Caco-2 (cell line): ENCODE measurements at regions of chr15 and their contacts with region 1.

Region 1: GRCh38 chr15:89017370-89018066 is 70.7 kb upstream of the ABHD2 start:
- DNase-seq: peak; percentile 83 to 88
- H3K4me3 ChIP-seq: peak overlapping the region; percentile 43
- H3K4me3 Mint-ChIP-seq: peak overlapping the region; percentile 73
- H3K27ac Mint-ChIP-seq: peak overlapping the region; percentile 39
- H3K4me1 ChIP-seq: no peaks in the 10 kb centered on the region
- H3K4me1 Mint-ChIP-seq: peaks cover 7% of the 10 kb centered on the region
- H3K27me3 ChIP-seq: no peaks in the 10 kb centered on the region
- H3K27me3 Mint-ChIP-seq: no peaks in the 10 kb centered on the region
- CTCF ChIP-seq: peak; percentile 75 to 84

Region 2: GRCh38 chr15:88989578-88989977 is 27.9 kb before region 1 on chr15:
- CTCF ChIA-PET with region 1: no interaction called
- POLR2A ChIA-PET with region 1: no interaction called
- intact Hi-C with region 1: loop called (anchors 2 kb)
- DNase-seq: no peak
- H3K4me3 ChIP-seq: peak overlapping the region; percentile 38
- H3K4me3 Mint-ChIP-seq: peak overlapping the region; percentile 73
- H3K27ac Mint-ChIP-seq: peak overlapping the region; percentile 83
- H3K4me1 ChIP-seq: peaks cover 85% of the 10 kb centered on the region
- H3K4me1 Mint-ChIP-seq: peaks cover 44% of the 10 kb centered on the region
- H3K27me3 ChIP-seq: no peaks in the 10 kb centered on the region
- H3K27me3 Mint-ChIP-seq: no peaks in the 10 kb centered on the region
- CTCF ChIP-seq: no peak

Region 3: DNA sequence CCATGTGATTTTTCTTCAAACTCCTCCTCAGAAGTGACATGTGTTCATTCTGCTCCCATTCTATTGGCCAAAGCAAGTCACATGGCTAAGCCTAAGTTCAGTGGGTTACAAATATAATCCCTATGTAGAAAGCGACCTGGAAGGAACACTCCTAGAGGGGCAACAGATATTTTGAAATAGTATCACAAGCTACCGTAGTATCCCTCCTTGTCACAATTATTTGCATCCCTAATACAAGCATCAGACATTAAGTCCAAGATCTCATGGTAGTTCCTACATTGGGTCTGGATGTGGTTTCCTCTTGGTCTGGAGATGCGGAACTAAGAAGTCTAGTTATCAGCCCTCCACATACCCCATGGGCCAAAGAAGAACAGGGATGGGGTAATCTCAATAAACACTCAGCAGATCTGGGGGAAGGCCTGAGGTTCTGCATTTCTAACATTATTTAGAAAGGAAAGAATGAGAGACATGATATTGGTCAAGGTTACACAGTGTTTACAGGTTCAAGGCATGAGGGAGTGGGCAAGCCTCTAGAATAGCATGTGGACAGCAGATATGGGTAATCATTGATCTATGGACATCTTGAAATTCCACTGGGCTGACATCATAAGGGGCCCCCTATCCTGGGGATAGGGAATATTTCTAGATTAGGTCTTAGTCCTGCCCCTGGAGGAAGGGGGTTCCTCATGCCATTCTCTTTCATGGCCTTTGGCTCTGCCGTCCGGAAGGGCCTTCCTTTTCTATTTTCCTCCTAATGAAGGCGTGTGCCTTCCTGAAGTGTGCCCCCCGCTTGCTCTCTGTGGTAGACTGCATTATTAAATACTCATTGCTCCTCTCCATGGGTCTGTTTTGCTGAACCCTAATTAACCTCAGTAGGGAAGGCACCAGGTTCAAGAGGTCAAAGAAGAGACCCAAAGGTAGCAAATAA is 52.9 kb after region 1 on chr15:
- CTCF ChIA-PET with region 1: no interaction called
- POLR2A ChIA-PET with region 1: no interaction called
- intact Hi-C with region 1: no loop called
- DNase-seq: no peak
- H3K4me3 ChIP-seq: no peak overlapping the region
- H3K4me3 Mint-ChIP-seq: no peak overlapping the region
- H3K27ac Mint-ChIP-seq: no peak overlapping the region
- H3K4me1 ChIP-seq: peaks cover 5% of the 10 kb centered on the region
- H3K4me1 Mint-ChIP-seq: peaks cover 11% of the 10 kb centered on the region
- H3K27me3 ChIP-seq: no peaks in the 10 kb centered on the region
- H3K27me3 Mint-ChIP-seq: no peaks in the 10 kb centered on the region
- CTCF ChIP-seq: no peak